Activated CD4-positive, alpha-beta T cell treated with anti-CD3 and anti-CD28 coated beads for 36 hours (primary cell): ENCODE measurements at regions of chr1 and their contacts with region 1.

Region 1: DNA sequence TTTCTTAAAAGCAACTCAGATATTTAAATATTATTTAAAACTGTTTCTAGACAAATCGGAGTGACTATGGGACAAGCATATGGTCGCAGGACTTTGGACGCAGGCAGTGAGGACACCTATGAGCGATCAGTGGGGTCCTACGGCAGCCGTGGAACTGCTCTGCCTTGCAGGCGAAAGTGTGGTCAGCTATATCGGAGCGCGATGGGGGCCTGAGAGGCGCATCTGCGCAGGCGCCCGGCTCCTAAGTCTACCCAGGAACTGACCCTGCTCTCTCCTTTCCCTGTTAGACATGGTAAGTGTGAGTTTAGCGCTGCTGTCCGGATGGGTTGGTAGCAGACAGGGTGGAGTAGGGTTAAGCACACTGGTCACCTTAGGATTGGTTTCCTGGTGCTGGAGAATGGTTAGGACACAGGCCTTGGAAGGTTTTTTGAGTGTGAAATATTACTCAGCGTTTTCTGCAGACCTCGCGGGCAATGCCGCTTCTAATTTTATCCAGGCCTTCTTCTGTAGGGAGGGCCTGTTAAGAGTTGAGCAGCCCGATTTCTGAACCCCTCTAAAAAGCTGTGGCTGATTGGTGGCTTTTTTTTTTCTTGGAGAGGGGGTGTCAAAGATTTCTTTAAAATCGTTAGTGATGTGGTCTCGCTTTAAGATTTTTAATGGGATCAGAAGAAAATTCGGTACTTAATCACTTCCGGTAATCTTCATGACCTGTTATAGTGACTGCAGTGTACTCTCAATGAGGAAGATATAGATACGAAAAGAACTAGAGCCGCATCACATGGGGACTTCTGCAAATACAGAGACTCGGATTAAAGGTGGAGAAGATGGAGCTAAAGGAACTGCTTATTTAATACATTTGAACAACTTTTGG is at the start of gene RABGGTB:
- DNase-seq: peak; percentile 97
- ATAC-seq: peak; percentile 94
- H3K4me3 Mint-ChIP-seq: peak within 1 kb of the TSS; percentile 100
- H3K27ac Mint-ChIP-seq: peak within 1 kb of the TSS; percentile 99
- H3K4me1 Mint-ChIP-seq: peaks cover 30% of the 10 kb centered on the region
- H3K27me3 Mint-ChIP-seq: peaks cover 2% of the 10 kb centered on the region
- total RNA-seq, gene RABGGTB: 121 to 190 TPM

Region 2: GRCh38 chr1:74771913-74772515 is 1014.2 kb before region 1 on chr1:
- CTCF ChIA-PET with region 1: no interaction called
- POLR2A ChIA-PET with region 1: no interaction called
- intact Hi-C with region 1: loop called in 1 of 2 experiments (anchors 10 kb)
- DNase-seq: peak; percentile 27
- ATAC-seq: no peak
- H3K4me3 Mint-ChIP-seq: no peak overlapping the region
- H3K27ac Mint-ChIP-seq: no peak overlapping the region
- H3K4me1 Mint-ChIP-seq: no peaks in the 10 kb centered on the region
- H3K27me3 Mint-ChIP-seq: peaks cover 9% of the 10 kb centered on the region

Region 3: DNA sequence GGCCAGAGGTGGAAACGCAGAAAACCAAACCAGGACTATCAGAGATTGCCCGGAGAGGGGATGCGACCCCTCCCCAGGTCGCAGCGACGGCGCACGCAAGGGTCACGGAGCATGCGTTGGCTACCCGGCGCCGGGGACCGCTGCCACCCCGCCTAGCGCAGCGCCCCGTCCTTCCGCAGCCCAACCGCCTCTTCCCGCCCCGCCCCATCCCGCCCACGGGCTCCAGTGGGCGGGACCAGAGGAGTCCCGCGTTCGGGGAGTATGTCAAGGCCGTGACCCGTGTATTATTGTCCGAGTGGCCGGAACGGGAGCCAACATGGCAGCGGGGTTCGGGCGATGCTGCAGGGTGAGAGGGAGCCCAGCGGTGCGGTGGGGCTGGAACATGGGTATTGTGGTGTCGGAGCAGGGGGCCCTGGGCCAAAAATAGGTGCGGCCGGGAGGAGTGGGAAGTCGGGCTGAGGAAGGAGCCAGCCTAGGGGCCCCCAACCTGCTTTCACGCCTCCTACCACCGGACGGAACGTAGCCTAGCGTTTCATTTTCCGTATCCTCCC is 61.7 kb before region 1 on chr1 and contains the start of gene ACADM:
- CTCF ChIA-PET with region 1: no interaction called
- POLR2A ChIA-PET with region 1: interaction called, 3 read pairs
- intact Hi-C with region 1: loop called (anchors 1 kb)
- DNase-seq: peak; percentile 91
- ATAC-seq: peak; percentile 94
- H3K4me3 Mint-ChIP-seq: peak within 1 kb of the TSS; percentile 98
- H3K27ac Mint-ChIP-seq: peak within 1 kb of the TSS; percentile 98
- H3K4me1 Mint-ChIP-seq: peaks cover 40% of the 10 kb centered on the region
- H3K27me3 Mint-ChIP-seq: no peaks in the 10 kb centered on the region
- total RNA-seq, gene ACADM: 47.2 to 51.8 TPM

Region 4: GRCh38 chr1:75796376-75797272 is 10.4 kb after region 1 on chr1 and contains the start of gene MSH4:
- CTCF ChIA-PET with region 1: interaction called, 4 read pairs
- POLR2A ChIA-PET with region 1: interaction called, 10 read pairs
- intact Hi-C with region 1: no loop called
- DNase-seq: peak; percentile 41
- ATAC-seq: peak; percentile 35
- H3K4me3 Mint-ChIP-seq: peak within 1 kb of the TSS; percentile 11
- H3K27ac Mint-ChIP-seq: peak within 1 kb of the TSS; percentile 58
- H3K4me1 Mint-ChIP-seq: peaks cover 11% of the 10 kb centered on the region
- H3K27me3 Mint-ChIP-seq: no peaks in the 10 kb centered on the region
- total RNA-seq, gene MSH4: 0.21 to 0.39 TPM

Region 5: DNA sequence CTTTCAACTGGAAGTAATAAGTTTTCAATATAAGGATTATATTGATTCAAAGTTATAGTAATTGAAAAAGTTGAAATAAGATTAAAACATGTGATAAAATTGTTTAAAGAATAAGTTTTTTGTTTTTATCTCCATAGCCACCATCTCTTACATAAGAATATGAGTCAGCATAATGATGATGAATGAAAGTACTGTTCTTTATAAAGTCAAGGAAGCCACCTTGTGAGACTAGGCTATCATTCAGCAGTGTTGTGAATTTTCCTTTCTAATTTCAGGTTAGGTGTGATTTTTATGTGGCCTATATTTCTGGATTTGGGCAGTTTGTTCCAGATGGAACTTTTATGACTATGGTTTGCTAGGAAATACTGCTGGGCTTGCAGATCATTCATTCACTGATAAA is 168.4 kb after region 1 on chr1:
- CTCF ChIA-PET with region 1: no interaction called
- POLR2A ChIA-PET with region 1: no interaction called
- intact Hi-C with region 1: no loop called
- DNase-seq: no peak
- ATAC-seq: no peak
- H3K4me3 Mint-ChIP-seq: no peak overlapping the region
- H3K27ac Mint-ChIP-seq: no peak overlapping the region
- H3K4me1 Mint-ChIP-seq: no peaks in the 10 kb centered on the region
- H3K27me3 Mint-ChIP-seq: no peaks in the 10 kb centered on the region

Region 6: DNA sequence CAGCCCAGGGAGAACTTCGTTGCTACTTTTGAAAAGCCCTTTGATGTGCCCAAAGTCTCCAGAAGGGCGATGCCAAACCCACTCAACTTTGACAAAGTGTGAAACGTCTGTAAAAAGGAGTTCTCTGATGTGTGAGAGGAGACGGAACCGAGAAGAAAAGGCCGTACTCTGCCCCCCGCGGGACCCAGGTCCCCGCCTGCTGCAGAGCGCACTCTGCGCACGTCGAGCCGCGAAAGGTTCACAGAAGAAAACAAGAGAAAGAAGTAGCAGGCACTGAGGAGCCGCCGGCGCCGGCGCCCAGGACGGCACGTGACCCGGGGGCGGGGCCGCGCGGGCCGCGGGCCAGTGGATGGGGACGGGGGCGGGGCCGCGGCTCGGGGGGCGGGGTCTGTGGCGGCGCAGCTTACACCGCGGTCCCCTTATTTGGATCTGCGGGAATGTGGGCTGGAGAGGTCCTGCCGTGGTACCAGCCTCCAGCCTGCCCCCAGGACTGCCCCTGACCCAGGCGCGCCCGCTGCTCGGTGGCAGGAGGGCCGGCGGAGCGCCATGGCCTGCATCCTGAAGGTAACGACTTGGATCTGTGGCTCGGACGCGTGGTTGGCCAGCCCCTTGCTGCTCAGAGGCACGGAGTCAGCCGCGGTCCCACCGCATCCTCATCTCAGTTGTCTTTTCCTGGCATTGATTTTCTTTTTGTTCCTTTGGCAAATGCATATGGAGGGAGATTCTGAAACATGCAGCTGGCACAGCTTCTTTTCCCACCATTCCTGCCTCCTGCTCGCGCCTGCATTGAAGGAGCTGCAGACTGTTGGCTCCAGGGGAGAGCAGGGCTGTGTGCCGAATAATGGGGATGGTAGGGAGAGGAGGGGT is 288.3 kb after region 1 on chr1 and contains the start of gene ST6GALNAC3:
- CTCF ChIA-PET with region 1: no interaction called
- POLR2A ChIA-PET with region 1: no interaction called
- intact Hi-C with region 1: loop called in 1 of 2 experiments (anchors 5 kb)
- DNase-seq: peak; percentile 86
- ATAC-seq: peak; percentile 99
- H3K4me3 Mint-ChIP-seq: peak within 1 kb of the TSS; percentile 74
- H3K27ac Mint-ChIP-seq: peak within 1 kb of the TSS; percentile 21
- H3K4me1 Mint-ChIP-seq: peaks cover 23% of the 10 kb centered on the region
- H3K27me3 Mint-ChIP-seq: no peaks in the 10 kb centered on the region
- total RNA-seq, gene ST6GALNAC3: 0.73 to 1.1 TPM

Region 7: DNA sequence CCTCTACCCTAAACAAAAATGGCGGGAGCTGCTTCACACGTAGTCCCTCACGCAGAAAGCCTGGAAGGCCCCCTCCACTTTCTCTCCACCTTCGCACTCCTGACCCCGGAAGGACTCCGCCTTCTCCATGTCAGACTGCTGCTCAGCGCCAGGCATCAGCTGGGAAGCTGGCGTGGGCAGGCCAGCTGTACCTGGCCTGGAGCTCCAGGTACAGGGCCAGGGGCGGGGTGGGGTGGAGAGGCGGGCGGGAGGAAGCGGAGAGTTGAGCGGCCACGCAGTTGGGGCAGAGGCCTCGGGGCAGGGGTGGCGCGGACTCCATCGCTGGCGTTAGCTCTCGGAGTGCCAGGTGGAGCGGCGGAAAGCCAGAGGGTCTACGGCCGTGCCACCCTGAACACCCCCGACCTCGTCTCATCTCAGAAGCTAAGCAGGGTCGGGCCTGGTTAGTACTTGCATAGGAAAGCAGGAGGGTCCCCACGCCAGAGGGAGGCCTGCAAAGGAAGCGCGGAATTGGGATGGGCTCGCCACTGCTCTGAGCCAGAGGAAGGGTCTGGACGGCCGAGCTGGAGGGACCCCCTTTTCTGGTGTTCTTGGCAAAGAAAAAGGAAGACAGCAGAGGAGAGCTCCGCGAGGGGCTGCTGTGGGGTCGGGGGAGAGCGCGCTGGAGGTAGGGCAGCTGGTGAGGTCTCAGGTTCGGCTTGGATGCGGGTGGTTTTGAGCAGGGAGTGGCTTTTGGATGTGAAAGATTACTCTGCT is 1993.5 kb after region 1 on chr1 and contains the start of gene MIGA1:
- CTCF ChIA-PET with region 1: no interaction called
- POLR2A ChIA-PET with region 1: no interaction called
- intact Hi-C with region 1: loop called in 1 of 2 experiments (anchors 5 kb)
- DNase-seq: peak; percentile 91
- ATAC-seq: peak; percentile 96
- H3K4me3 Mint-ChIP-seq: peak within 1 kb of the TSS; percentile 91
- H3K27ac Mint-ChIP-seq: peak within 1 kb of the TSS; percentile 93
- H3K4me1 Mint-ChIP-seq: peaks cover 34% of the 10 kb centered on the region
- H3K27me3 Mint-ChIP-seq: no peaks in the 10 kb centered on the region
- total RNA-seq, gene MIGA1: 7.2 to 9.0 TPM